ENCODE measurements at regions of chr3 and their contacts with region 1.

Region 1: GRCh38 chr3:100875239-100875638 is 118.0 kb downstream of the ABI3BP start:
- DNase-seq: peak; percentile 98
- ATAC-seq: peak; percentile 96
- H3K4me3 ChIP-seq: peak overlapping the region; percentile 39
- H3K27ac ChIP-seq: peak overlapping the region; percentile 76
- H3K4me1 ChIP-seq: peaks cover 19% of the 10 kb centered on the region
- H3K27me3 ChIP-seq: no peaks in the 10 kb centered on the region
- CTCF ChIP-seq: no peak

Region 2: GRCh38 chr3:100810671-100811070 is 64.6 kb before region 1 on chr3:
- CTCF ChIA-PET with region 1: no interaction called
- POLR2A ChIA-PET with region 1: no interaction called
- intact Hi-C with region 1: loop called (anchors 10 kb)
- DNase-seq: no peak
- ATAC-seq: no peak; the same call in 1 of the 2 replicates
- H3K4me3 ChIP-seq: no peak overlapping the region
- H3K27ac ChIP-seq: no peak overlapping the region
- H3K4me1 ChIP-seq: no peaks in the 10 kb centered on the region
- H3K27me3 ChIP-seq: no peaks in the 10 kb centered on the region
- CTCF ChIP-seq: no peak

Region 3: GRCh38 chr3:101156787-101157345 is 281.6 kb after region 1 on chr3:
- CTCF ChIA-PET with region 1: no interaction called
- POLR2A ChIA-PET with region 1: no interaction called
- intact Hi-C with region 1: loop called (anchors 1 kb)
- DNase-seq: no peak
- ATAC-seq: no peak
- H3K4me3 ChIP-seq: no peak overlapping the region
- H3K27ac ChIP-seq: no peak overlapping the region
- H3K4me1 ChIP-seq: peaks cover 8% of the 10 kb centered on the region; the same call in 1 of the 2 replicates
- H3K27me3 ChIP-seq: no peaks in the 10 kb centered on the region
- CTCF ChIP-seq: no peak

Region 4: GRCh38 chr3:101625879-101626278 is 750.6 kb after region 1 on chr3:
- CTCF ChIA-PET with region 1: no interaction called
- POLR2A ChIA-PET with region 1: interaction called, 10 read pairs
- intact Hi-C with region 1: no loop called
- DNase-seq: no peak
- ATAC-seq: no peak
- H3K4me3 ChIP-seq: no peak overlapping the region
- H3K27ac ChIP-seq: no peak overlapping the region
- H3K4me1 ChIP-seq: no peaks in the 10 kb centered on the region
- H3K27me3 ChIP-seq: no peaks in the 10 kb centered on the region
- CTCF ChIP-seq: no peak

Measured in PC-3 (cell line).